Right ventricle myocardium inferior (tissue), 1 donor: ENCODE measurements at regions of chr15 and their contacts with region 1.

Region 1: GRCh38 chr15:65054333-65055200 is 9.4 kb downstream of the SLC51B start:
- DNase-seq: peak; percentile 86
- ATAC-seq: peak; percentile 80

Region 2: DNA sequence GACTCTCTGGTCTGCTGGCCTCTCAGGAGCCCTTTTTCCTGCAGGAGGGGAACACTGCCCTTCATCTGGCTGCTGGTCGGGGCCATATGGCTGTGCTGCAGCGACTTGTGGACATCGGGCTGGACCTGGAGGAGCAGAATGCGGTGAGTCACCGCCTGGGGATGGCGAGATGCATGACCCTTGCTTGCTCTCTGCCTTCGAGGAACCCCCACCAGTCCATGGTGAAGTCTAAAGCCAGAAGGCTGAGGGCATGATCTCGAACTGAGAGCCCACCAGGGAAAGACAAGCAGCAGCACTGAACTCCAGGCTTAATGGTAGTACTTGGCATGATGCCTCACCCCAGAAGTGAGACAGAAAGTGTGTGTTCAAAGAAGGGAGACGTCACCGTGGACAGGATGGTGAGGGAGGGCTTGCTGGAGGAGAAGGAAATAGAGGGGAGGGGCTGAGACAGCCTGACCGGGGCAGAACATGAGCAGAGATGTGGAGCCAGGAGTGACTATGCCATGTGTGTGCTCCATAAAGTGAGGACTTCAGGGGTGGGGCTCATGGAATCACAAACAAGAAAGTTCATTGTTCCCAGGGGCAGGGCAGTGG is 123.7 kb before region 1 on chr15:
- intact Hi-C with region 1: no loop called
- DNase-seq: no peak
- ATAC-seq: no peak

Region 3: DNA sequence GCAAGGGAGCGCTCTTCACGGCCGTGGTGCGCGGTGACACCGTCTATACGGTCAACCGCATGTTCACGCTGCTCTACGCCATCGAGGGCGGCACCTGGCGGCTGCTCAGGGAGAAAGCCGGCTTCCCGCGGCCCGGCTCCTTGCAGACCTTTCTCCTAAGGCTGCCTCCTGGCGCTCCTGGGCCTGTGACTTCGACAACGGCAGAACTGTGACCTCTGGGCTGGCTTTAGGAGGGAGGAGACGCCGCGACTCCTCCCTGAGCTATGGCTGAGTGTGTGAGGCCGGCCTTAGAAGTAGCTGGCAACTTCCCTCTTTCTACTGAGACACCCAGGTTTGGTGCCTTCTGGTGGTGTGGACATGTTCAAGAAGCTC is 23.4 kb after region 1 on chr15:
- intact Hi-C with region 1: loop called (anchors 2 kb)
- DNase-seq: peak; percentile 88
- ATAC-seq: peak; percentile 71

Region 4: GRCh38 chr15:65101411-65101890 is 46.9 kb after region 1 on chr15:
- intact Hi-C with region 1: loop called (anchors 1 kb)
- DNase-seq: no peak
- ATAC-seq: peak; percentile 60